Naive thymus-derived CD4-positive, alpha-beta T cell (primary cell): ENCODE measurements at regions of chr5 and their contacts with region 1.

Region 1: DNA sequence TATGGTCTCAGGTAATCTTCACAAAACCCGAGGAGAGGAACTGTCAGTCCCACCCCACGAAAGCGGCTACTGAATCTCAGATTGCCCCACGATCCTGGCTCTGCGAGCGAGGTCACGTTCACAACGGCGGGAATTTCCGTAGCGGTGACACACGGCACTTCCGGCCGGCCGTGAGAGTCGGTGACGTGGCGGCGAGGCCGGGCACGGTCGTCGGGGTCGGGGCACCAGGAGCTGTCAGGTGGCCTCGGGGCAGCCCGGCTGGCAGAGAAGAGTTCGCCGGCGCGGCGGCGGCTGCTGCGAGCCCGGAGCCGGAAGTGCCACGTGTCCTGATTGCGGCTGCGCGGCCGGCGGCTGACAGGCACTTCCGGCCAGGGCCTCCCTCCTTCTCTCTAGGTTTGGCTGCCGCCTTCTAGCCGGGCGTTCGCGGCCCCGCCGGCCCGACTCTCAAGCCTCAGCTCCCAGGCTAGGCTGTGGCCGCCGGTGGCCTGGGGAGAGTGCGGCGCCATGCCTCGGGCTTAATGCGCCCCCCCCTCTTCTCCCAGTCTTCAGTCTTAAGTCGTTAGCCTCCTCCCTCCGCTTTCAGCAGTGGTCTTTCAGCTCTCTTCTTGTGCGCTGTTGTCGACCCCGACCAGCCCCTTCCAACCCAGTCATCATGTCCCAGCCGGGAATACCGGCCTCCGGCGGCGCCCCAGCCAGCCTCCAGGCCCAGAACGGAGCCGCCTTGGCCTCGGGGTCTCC is at the start of gene SEC24A:
- DNase-seq: peak; percentile 83 to 93 (median 86)
- ATAC-seq: peak; percentile 92
- H3K4me3 ChIP-seq: peak within 1 kb of the TSS; percentile 76
- H3K4me3 Mint-ChIP-seq: peak within 1 kb of the TSS; percentile 89 to 100 (median 98)
- H3K27ac ChIP-seq: peak within 1 kb of the TSS; percentile 91
- H3K27ac Mint-ChIP-seq: peak within 1 kb of the TSS; percentile 94 to 100 (median 99)
- H3K4me1 ChIP-seq: peaks cover 7 to 9% of the 10 kb centered on the region in 2 donors
- H3K4me1 Mint-ChIP-seq: peaks cover 13 to 40% (median 26%) of the 10 kb centered on the region in 7 donors
- H3K27me3 ChIP-seq: no peaks in the 10 kb centered on the region
- H3K27me3 Mint-ChIP-seq: no peaks in the 10 kb centered on the region
- total RNA-seq, gene SEC24A: 13.6 to 30.9 (median 16.0) TPM

Region 2: GRCh38 chr5:133968049-133968980 is 680.3 kb before region 1 on chr5 and contains the start of gene C5orf15:
- CTCF ChIA-PET with region 1: no interaction called
- POLR2A ChIA-PET with region 1: no interaction called
- intact Hi-C with region 1: loop called in 1 of 2 experiments (anchors 5 kb)
- DNase-seq: peak; percentile 72 to 93 (median 87)
- ATAC-seq: peak; percentile 98
- H3K4me3 ChIP-seq: peak within 1 kb of the TSS; percentile 90
- H3K4me3 Mint-ChIP-seq: peak within 1 kb of the TSS; percentile 93 to 100 (median 98)
- H3K27ac ChIP-seq: peak within 1 kb of the TSS; percentile 94
- H3K27ac Mint-ChIP-seq: peak within 1 kb of the TSS; percentile 92 to 99 (median 97)
- H3K4me1 ChIP-seq: peaks cover 10 to 16% of the 10 kb centered on the region in 2 donors
- H3K4me1 Mint-ChIP-seq: peaks cover 21 to 63% (median 52%) of the 10 kb centered on the region in 7 donors
- H3K27me3 ChIP-seq: no peaks in the 10 kb centered on the region
- H3K27me3 Mint-ChIP-seq: no peaks in the 10 kb centered on the region
- total RNA-seq, gene C5orf15: 11.1 to 33.6 (median 17.9) TPM

Region 3: DNA sequence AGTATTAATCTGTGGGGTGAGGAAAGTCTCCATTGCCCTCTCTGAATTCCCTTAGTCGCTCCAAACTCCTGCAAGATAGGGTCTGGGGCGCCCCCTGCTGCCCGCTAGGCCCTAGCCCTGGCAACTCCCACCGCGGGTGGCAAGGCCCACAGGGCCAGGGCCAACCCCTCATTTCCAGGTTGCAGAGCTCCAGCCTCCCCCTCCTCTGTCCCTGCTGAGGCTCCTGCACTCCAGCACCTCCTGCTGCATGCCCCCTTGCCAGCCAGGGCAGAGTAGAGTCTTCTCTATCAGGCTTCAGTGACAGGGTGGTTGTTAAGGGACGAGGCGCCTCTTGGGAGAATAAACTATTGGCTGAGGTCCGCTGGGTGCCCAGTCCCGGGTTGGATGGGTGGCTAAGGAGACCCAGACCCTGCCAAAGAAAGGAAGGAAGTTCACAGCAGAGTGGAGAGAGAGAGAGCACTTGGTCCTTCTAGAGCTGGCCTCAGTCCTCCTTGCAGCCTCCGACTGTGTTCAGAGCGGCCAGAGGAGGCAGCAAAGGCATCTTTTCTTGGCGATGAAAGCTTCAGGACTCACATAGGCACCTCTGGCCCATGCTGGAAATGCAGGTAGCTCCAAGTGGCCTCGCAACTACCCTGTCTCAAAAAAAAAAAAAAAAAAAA is 61.6 kb before region 1 on chr5:
- CTCF ChIA-PET with region 1: no interaction called
- POLR2A ChIA-PET with region 1: no interaction called
- intact Hi-C with region 1: loop called in 1 of 2 experiments (anchors 5 kb)
- DNase-seq: peak; percentile 56 to 88 (median 76)
- ATAC-seq: peak; percentile 93
- H3K4me3 ChIP-seq: peak overlapping the region; percentile 11
- H3K4me3 Mint-ChIP-seq: peak overlapping the region in 8 of 10 donors; percentile 9 to 63 (median 25)
- H3K27ac ChIP-seq: no peak overlapping the region
- H3K27ac Mint-ChIP-seq: peak overlapping the region; percentile 22 to 84 (median 54)
- H3K4me1 ChIP-seq: peaks cover 4% of the 10 kb centered on the region in 2 donors
- H3K4me1 Mint-ChIP-seq: peaks cover 0 to 17% (median 9%) of the 10 kb centered on the region in 7 donors
- H3K27me3 ChIP-seq: no peaks in the 10 kb centered on the region
- H3K27me3 Mint-ChIP-seq: no peaks in the 10 kb centered on the region

Region 4: GRCh38 chr5:134626369-134627014 is 22.1 kb before region 1 on chr5:
- CTCF ChIA-PET with region 1: no interaction called
- POLR2A ChIA-PET with region 1: interaction called, 16 read pairs
- intact Hi-C with region 1: no loop called
- DNase-seq: no peak
- ATAC-seq: no peak
- H3K4me3 ChIP-seq: no peak overlapping the region
- H3K4me3 Mint-ChIP-seq: peak overlapping the region in 2 of 10 donors; percentile 7 to 51
- H3K27ac ChIP-seq: no peak overlapping the region
- H3K27ac Mint-ChIP-seq: peak overlapping the region in 3 of 9 donors; percentile 1 to 8 (median 8)
- H3K4me1 ChIP-seq: peaks cover 0 to 6% of the 10 kb centered on the region in 2 donors
- H3K4me1 Mint-ChIP-seq: peaks cover 25 to 47% (median 37%) of the 10 kb centered on the region in 7 donors
- H3K27me3 ChIP-seq: no peaks in the 10 kb centered on the region
- H3K27me3 Mint-ChIP-seq: no peaks in the 10 kb centered on the region

Region 5: DNA sequence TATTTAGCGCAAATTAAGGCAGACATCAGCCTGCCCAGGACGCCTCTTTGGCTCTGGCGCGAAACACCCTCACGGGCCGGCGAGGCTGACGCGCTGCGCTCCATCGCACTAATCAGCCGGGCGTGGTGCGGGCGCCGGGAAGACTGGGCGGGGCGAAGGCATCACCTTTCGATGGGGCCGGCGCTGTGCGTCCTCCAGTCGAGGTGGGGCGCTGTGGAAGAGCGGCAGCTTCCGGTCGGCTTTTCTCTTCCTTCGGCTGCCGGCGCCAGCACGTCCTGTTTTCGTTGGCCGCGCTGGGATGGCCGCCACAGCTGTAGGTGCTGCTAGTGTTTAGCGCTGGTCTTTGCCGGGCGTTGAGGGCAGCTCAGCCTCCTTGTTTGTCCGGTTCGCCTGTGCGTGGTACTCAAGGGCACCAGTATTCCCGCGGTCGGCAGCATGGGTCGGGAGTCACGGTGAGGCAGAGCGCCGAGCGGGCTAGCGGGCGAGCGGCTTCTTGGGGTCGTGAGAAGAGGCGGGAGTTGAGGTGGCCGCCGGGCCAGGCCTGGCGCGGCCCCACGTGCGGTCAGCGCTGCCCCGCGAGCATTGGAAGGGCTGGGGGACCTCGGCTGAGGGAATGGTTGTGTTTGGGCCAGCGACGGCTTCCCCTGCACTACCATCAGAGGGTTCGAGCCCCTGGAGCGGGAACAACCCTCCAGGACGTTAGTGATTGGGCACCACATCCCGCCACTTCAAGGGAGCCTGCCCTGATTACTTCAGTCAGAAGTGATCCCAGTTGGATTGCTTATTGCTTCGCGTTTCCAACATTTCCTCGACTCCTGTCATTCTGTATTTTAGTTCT is 110.1 kb after region 1 on chr5 and contains the start of gene DDX46:
- CTCF ChIA-PET with region 1: no interaction called
- POLR2A ChIA-PET with region 1: no interaction called
- intact Hi-C with region 1: loop called (anchors 1 kb)
- DNase-seq: peak; percentile 85 to 95 (median 91)
- ATAC-seq: peak; percentile 99
- H3K4me3 ChIP-seq: peak within 1 kb of the TSS; percentile 75
- H3K4me3 Mint-ChIP-seq: peak within 1 kb of the TSS; percentile 92 to 100 (median 99)
- H3K27ac ChIP-seq: peak within 1 kb of the TSS; percentile 87
- H3K27ac Mint-ChIP-seq: peak within 1 kb of the TSS; percentile 93 to 99 (median 97)
- H3K4me1 ChIP-seq: peaks cover 12 to 13% of the 10 kb centered on the region in 2 donors
- H3K4me1 Mint-ChIP-seq: peaks cover 20 to 47% (median 38%) of the 10 kb centered on the region in 7 donors
- H3K27me3 ChIP-seq: no peaks in the 10 kb centered on the region
- H3K27me3 Mint-ChIP-seq: no peaks in the 10 kb centered on the region
- total RNA-seq, gene DDX46: 51.2 to 72.5 (median 64.2) TPM